WTC11 (cell line): ENCODE measurements at regions of chr17 and their contacts with region 1.

Region 1: GRCh38 chr17:76000016-76000754 is 470 bp upstream of the CDK3 start:
- DNase-seq: peak; percentile 90
- ATAC-seq: peak; percentile 92
- H3K4me3 Mint-ChIP-seq: no peak overlapping the region
- H3K27ac Mint-ChIP-seq: no peak overlapping the region; the same call in 1 of the 2 replicates
- H3K4me1 Mint-ChIP-seq: peaks cover 14% of the 10 kb centered on the region
- H3K27me3 Mint-ChIP-seq: no peaks in the 10 kb centered on the region
- CTCF ChIP-seq: peak; percentile 81

Region 2: DNA sequence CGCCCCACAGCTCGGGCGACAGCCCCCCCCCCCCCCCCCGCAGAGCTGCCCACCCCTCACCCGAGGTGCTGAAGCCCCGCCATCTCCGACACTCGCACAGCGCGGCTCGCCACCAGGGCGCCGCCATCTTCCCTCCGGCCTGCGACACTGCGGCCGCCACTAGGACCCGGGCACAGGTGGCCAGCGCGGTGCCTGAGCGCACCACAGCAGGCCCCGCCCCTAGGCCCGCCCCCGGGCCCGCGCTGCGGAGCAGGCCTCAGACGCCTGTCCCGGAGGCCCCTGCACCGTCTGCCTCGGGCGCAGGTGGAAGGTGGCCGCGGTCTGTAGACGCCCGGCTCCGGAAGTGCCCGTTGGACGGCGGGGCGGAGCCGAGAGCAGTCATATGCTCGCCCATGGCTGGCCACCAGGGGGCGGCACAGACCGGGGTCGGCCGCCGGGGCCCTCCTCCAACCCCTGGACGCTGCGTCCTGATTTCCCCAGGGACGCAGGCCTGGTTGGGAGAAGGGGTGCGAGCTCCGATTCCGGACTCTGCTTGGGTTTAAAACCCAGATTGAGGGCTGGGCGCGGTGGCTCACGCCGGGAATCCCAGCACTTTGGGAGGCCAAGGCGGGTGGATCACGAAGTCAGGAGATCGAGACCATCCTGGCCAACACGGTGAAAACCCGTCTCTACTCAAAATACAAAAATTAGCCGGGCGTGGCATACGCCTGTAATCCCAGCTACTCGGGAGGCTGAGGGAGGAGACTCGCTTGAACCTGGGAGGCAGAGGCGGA is 95.2 kb before region 1 on chr17 and contains the start of gene MRPL38:
- CTCF ChIA-PET with region 1: interaction called, 70 read pairs
- POLR2A ChIA-PET with region 1: no interaction called
- DNase-seq: peak; percentile 96
- ATAC-seq: peak; percentile 98
- H3K4me3 Mint-ChIP-seq: peak within 1 kb of the TSS; percentile 98
- H3K27ac Mint-ChIP-seq: peak within 1 kb of the TSS; percentile 95
- H3K4me1 Mint-ChIP-seq: peaks cover 3% of the 10 kb centered on the region; the same call in 1 of the 2 replicates
- H3K27me3 Mint-ChIP-seq: no peaks in the 10 kb centered on the region
- CTCF ChIP-seq: peak; percentile 97
- total RNA-seq, gene MRPL38: 107 to 146 TPM (median 116 TPM) in 3 replicates

Region 3: DNA sequence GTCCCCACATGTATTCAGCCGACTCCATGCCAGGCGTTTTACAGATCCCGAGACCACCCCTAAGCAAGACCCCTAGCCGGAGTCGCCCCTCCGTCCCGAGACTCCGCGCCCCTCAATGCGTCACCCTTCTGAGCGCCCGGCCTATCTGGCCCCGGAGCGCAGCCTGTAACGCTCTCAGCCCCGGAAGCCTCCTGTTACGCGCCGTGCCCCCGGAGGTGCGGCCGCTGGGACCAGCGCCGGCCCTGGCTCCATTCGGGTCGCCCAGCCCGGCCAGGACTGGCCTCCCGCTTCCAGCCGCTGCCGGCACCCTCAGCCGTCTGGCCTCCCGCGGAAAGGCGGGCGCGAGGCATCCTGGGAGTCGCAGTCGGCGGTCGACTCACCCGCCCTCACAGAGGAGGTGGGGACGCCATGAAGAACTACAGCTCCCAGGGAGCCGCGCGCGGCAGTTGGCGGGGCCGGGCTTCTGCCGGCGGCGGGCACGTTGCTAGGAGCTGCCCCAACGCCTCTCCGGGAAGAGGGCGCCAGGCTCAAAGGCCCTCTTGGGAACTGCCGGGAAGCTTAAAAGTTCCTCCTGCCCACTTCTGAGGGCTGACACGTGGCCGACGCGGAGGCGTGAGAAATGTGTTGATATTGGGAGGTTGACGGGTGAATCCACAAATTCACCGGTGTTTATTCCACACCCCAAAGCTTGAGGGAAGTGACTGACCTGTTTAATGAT is 59.3 kb before region 1 on chr17 and contains the start of gene FBF1:
- CTCF ChIA-PET with region 1: interaction called, 13 read pairs
- POLR2A ChIA-PET with region 1: no interaction called
- DNase-seq: peak; percentile 97
- ATAC-seq: peak; percentile 98
- H3K4me3 Mint-ChIP-seq: peak within 1 kb of the TSS; percentile 90
- H3K27ac Mint-ChIP-seq: peak within 1 kb of the TSS; percentile 97
- H3K4me1 Mint-ChIP-seq: peaks cover 16% of the 10 kb centered on the region
- H3K27me3 Mint-ChIP-seq: no peaks in the 10 kb centered on the region
- CTCF ChIP-seq: no peak
- total RNA-seq, gene FBF1: 19.8 to 23.7 TPM (median 21.0 TPM) in 3 replicates

Region 4: GRCh38 chr17:75978938-75979704 is 21.1 kb before region 1 on chr17 and contains the starts of genes ACOX1 and TEN1:
- CTCF ChIA-PET with region 1: interaction called, 28 read pairs
- POLR2A ChIA-PET with region 1: no interaction called
- DNase-seq: peak; percentile 96
- ATAC-seq: peak; percentile 91
- H3K4me3 Mint-ChIP-seq: peak within 1 kb of the TSS; percentile 97
- H3K27ac Mint-ChIP-seq: peak within 1 kb of the TSS; percentile 100
- H3K4me1 Mint-ChIP-seq: peaks cover 63% of the 10 kb centered on the region
- H3K27me3 Mint-ChIP-seq: no peaks in the 10 kb centered on the region
- CTCF ChIP-seq: no peak
- total RNA-seq, gene ACOX1: 32.4 to 40.9 TPM (median 32.5 TPM) in 3 replicates
- total RNA-seq, gene TEN1: 15.6 to 18.4 TPM (median 17.2 TPM) in 3 replicates

Region 5: GRCh38 chr17:76022285-76022684 is 22.1 kb after region 1 on chr17:
- CTCF ChIA-PET with region 1: interaction called, 72 read pairs
- POLR2A ChIA-PET with region 1: no interaction called
- DNase-seq: no peak
- ATAC-seq: no peak
- H3K4me3 Mint-ChIP-seq: no peak overlapping the region
- H3K27ac Mint-ChIP-seq: no peak overlapping the region
- H3K4me1 Mint-ChIP-seq: peaks cover under 1% of the 10 kb centered on the region; the same call in 1 of the 2 replicates
- H3K27me3 Mint-ChIP-seq: no peaks in the 10 kb centered on the region
- CTCF ChIP-seq: no peak